Naive thymus-derived CD4-positive, alpha-beta T cell (primary cell): ENCODE measurements at regions of chr12 and their contacts with region 1.

Region 1: GRCh38 chr12:85872497-85873091 is 1.5 kb upstream of the NTS start:
- DNase-seq: peak in 3 of 9 donors; percentile 2 to 26 (median 3)
- ATAC-seq: no peak
- H3K4me3 ChIP-seq: no peak overlapping the region
- H3K4me3 Mint-ChIP-seq: no peak overlapping the region
- H3K27ac ChIP-seq: no peak overlapping the region
- H3K27ac Mint-ChIP-seq: no peak overlapping the region
- H3K4me1 ChIP-seq: no peaks in the 10 kb centered on the region
- H3K4me1 Mint-ChIP-seq: no peaks in the 10 kb centered on the region
- H3K27me3 ChIP-seq: no peaks in the 10 kb centered on the region
- H3K27me3 Mint-ChIP-seq: peaks cover 0 to 2% (median 0%) of the 10 kb centered on the region in 5 donors

Region 2: GRCh38 chr12:83904175-83904574 is 1968.4 kb before region 1 on chr12:
- CTCF ChIA-PET with region 1: no interaction called
- POLR2A ChIA-PET with region 1: no interaction called
- intact Hi-C with region 1: no loop called
- DNase-seq: no peak
- ATAC-seq: no peak
- H3K4me3 ChIP-seq: no peak overlapping the region
- H3K4me3 Mint-ChIP-seq: no peak overlapping the region
- H3K27ac ChIP-seq: no peak overlapping the region
- H3K27ac Mint-ChIP-seq: no peak overlapping the region
- H3K4me1 ChIP-seq: no peaks in the 10 kb centered on the region
- H3K4me1 Mint-ChIP-seq: no peaks in the 10 kb centered on the region
- H3K27me3 ChIP-seq: no peaks in the 10 kb centered on the region
- H3K27me3 Mint-ChIP-seq: no peaks in the 10 kb centered on the region

Region 3: DNA sequence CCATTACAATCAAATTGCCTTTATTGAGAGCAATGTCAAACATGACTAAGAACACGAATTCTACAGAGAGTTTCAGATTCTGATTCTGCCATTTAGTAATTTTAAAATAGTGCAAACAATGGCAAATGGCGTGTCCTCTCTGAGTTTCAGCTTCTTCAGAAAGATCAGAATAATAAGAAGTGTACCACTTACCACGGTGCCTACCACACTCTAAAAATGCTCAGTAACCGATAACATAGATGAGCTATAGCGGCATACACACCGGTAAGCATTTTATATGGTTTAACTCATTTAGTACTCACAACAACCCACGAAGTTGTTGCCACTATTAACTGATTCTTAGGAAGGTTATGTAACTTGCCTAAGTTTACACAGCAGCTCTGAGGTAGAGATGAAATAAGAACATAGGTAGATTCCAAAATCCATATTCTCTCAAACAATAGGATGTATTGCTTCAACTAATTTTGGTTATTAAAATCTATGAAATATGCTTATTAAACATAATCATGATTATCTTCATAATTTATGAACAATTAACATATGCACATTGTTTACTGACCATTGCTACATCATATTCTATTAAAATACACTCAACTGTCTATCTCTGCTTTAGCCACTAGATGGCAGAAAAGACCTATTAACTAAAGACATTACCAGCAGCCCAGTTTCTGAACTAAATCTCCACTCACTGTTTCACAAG is 998.3 kb before region 1 on chr12:
- CTCF ChIA-PET with region 1: no interaction called
- POLR2A ChIA-PET with region 1: no interaction called
- intact Hi-C with region 1: loop called (anchors 1 kb)
- DNase-seq: peak in 5 of 9 donors; percentile 2 to 40 (median 25)
- ATAC-seq: peak; percentile 67
- H3K4me3 ChIP-seq: no peak overlapping the region
- H3K4me3 Mint-ChIP-seq: no peak overlapping the region
- H3K27ac ChIP-seq: no peak overlapping the region
- H3K27ac Mint-ChIP-seq: no peak overlapping the region
- H3K4me1 ChIP-seq: no peaks in the 10 kb centered on the region
- H3K4me1 Mint-ChIP-seq: no peaks in the 10 kb centered on the region
- H3K27me3 ChIP-seq: no peaks in the 10 kb centered on the region
- H3K27me3 Mint-ChIP-seq: peaks cover 0 to 10% (median 0%) of the 10 kb centered on the region in 5 donors

Region 4: GRCh38 chr12:85076688-85077430 is 795.7 kb before region 1 on chr12:
- CTCF ChIA-PET with region 1: no interaction called
- POLR2A ChIA-PET with region 1: no interaction called
- intact Hi-C with region 1: loop called in 1 of 2 experiments (anchors 5 kb)
- DNase-seq: no peak
- ATAC-seq: no peak
- H3K4me3 ChIP-seq: no peak overlapping the region
- H3K4me3 Mint-ChIP-seq: no peak overlapping the region
- H3K27ac ChIP-seq: no peak overlapping the region
- H3K27ac Mint-ChIP-seq: no peak overlapping the region
- H3K4me1 ChIP-seq: no peaks in the 10 kb centered on the region
- H3K4me1 Mint-ChIP-seq: no peaks in the 10 kb centered on the region
- H3K27me3 ChIP-seq: no peaks in the 10 kb centered on the region
- H3K27me3 Mint-ChIP-seq: no peaks in the 10 kb centered on the region

Region 5: GRCh38 chr12:85424581-85425348 is 447.8 kb before region 1 on chr12:
- CTCF ChIA-PET with region 1: no interaction called
- POLR2A ChIA-PET with region 1: no interaction called
- intact Hi-C with region 1: loop called in 1 of 2 experiments (anchors 2 kb)
- DNase-seq: no peak
- ATAC-seq: no peak
- H3K4me3 ChIP-seq: no peak overlapping the region
- H3K4me3 Mint-ChIP-seq: no peak overlapping the region
- H3K27ac ChIP-seq: no peak overlapping the region
- H3K27ac Mint-ChIP-seq: no peak overlapping the region
- H3K4me1 ChIP-seq: no peaks in the 10 kb centered on the region
- H3K4me1 Mint-ChIP-seq: no peaks in the 10 kb centered on the region
- H3K27me3 ChIP-seq: no peaks in the 10 kb centered on the region
- H3K27me3 Mint-ChIP-seq: peaks cover 0 to 5% (median 0%) of the 10 kb centered on the region in 5 donors

Region 6: GRCh38 chr12:85468356-85469157 is 404.0 kb before region 1 on chr12:
- CTCF ChIA-PET with region 1: no interaction called
- POLR2A ChIA-PET with region 1: no interaction called
- intact Hi-C with region 1: loop called (anchors 1 kb)
- DNase-seq: peak in 6 of 9 donors; percentile 4 to 27 (median 14)
- ATAC-seq: peak; percentile 60
- H3K4me3 ChIP-seq: no peak overlapping the region
- H3K4me3 Mint-ChIP-seq: peak overlapping the region; percentile 48 to 92 (median 82)
- H3K27ac ChIP-seq: no peak overlapping the region
- H3K27ac Mint-ChIP-seq: peak overlapping the region in 5 of 9 donors; percentile 6 to 67 (median 45)
- H3K4me1 ChIP-seq: no peaks in the 10 kb centered on the region
- H3K4me1 Mint-ChIP-seq: peaks cover 0 to 18% (median 15%) of the 10 kb centered on the region in 7 donors
- H3K27me3 ChIP-seq: no peaks in the 10 kb centered on the region
- H3K27me3 Mint-ChIP-seq: peaks cover 0 to 6% (median 3%) of the 10 kb centered on the region in 5 donors

Region 7: DNA sequence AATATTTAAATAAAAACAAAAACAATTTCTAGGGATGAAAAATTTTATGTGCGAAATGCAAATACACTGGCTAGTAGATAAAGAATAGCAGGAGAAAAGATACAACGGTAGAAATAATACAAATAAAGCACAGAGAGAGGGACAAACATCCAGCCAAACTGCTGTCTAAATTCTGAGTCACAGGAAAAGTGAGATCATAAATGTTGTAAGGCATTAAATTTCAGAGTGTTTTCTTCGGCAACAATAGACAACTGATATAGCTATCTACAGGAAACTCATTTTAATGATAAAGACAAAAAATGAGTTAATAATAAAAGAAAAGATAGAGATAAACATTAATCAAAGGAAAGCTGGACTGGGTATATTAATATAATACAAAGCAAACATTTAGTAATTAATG is 123.7 kb after region 1 on chr12:
- CTCF ChIA-PET with region 1: no interaction called
- POLR2A ChIA-PET with region 1: no interaction called
- intact Hi-C with region 1: no loop called
- DNase-seq: no peak
- ATAC-seq: no peak
- H3K4me3 ChIP-seq: no peak overlapping the region
- H3K4me3 Mint-ChIP-seq: no peak overlapping the region
- H3K27ac ChIP-seq: no peak overlapping the region
- H3K27ac Mint-ChIP-seq: no peak overlapping the region
- H3K4me1 ChIP-seq: no peaks in the 10 kb centered on the region
- H3K4me1 Mint-ChIP-seq: no peaks in the 10 kb centered on the region
- H3K27me3 ChIP-seq: no peaks in the 10 kb centered on the region
- H3K27me3 Mint-ChIP-seq: no peaks in the 10 kb centered on the region